Activated CD4-positive, alpha-beta T cell treated with anti-CD3 and anti-CD28 coated beads for 36 hours (primary cell): ENCODE measurements at regions of chr5 and their contacts with region 1.

Region 1: GRCh38 chr5:50325237-50325832 is 115.8 kb downstream of the EMB start:
- DNase-seq: no peak
- ATAC-seq: no peak
- H3K4me3 Mint-ChIP-seq: no peak overlapping the region
- H3K27ac Mint-ChIP-seq: no peak overlapping the region
- H3K4me1 Mint-ChIP-seq: peaks cover 10% of the 10 kb centered on the region
- H3K27me3 Mint-ChIP-seq: no peaks in the 10 kb centered on the region

Region 2: GRCh38 chr5:50675385-50675784 is 350.1 kb after region 1 on chr5:
- CTCF ChIA-PET with region 1: no interaction called
- POLR2A ChIA-PET with region 1: no interaction called
- intact Hi-C with region 1: loop called in 1 of 2 experiments (anchors 5 kb)
- DNase-seq: no peak
- ATAC-seq: no peak
- H3K4me3 Mint-ChIP-seq: no peak overlapping the region
- H3K27ac Mint-ChIP-seq: no peak overlapping the region
- H3K4me1 Mint-ChIP-seq: peaks cover 81% of the 10 kb centered on the region
- H3K27me3 Mint-ChIP-seq: no peaks in the 10 kb centered on the region

Region 3: DNA sequence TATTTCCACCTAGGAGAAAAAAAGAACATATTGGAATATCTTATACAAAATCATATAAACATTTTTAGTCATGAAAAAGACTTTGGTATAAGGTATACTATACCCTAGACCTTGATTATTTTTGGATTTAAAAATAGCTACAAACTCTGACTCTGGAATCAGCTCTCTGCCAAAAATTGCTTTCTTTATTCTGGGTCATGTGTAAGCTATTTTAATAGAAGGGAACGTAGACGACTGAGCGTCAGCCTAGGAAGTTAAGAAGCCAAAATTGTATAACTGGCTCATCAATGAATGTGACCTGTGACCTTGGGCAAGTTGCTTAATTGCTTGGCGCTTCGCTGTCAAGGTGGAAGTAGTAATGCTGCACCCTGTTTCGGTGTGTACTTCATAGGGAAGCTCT is 498.2 kb after region 1 on chr5:
- CTCF ChIA-PET with region 1: no interaction called
- POLR2A ChIA-PET with region 1: no interaction called
- intact Hi-C with region 1: no loop called
- DNase-seq: no peak
- ATAC-seq: no peak
- H3K4me3 Mint-ChIP-seq: no peak overlapping the region
- H3K27ac Mint-ChIP-seq: no peak overlapping the region
- H3K4me1 Mint-ChIP-seq: no peaks in the 10 kb centered on the region
- H3K27me3 Mint-ChIP-seq: no peaks in the 10 kb centered on the region